ENCODE measurements at regions of chr21 and their contacts with region 1.

Region 1: GRCh38 chr21:24514081-24514733 is 1093.1 kb downstream of the MRPL39 start:
- DNase-seq: peak in 3 of 9 donors; percentile 4 to 7 (median 4)
- ATAC-seq: no peak
- H3K4me3 ChIP-seq: no peak overlapping the region
- H3K4me3 Mint-ChIP-seq: no peak overlapping the region
- H3K27ac ChIP-seq: no peak overlapping the region
- H3K27ac Mint-ChIP-seq: no peak overlapping the region
- H3K4me1 ChIP-seq: no peaks in the 10 kb centered on the region
- H3K4me1 Mint-ChIP-seq: no peaks in the 10 kb centered on the region
- H3K27me3 ChIP-seq: no peaks in the 10 kb centered on the region
- H3K27me3 Mint-ChIP-seq: no peaks in the 10 kb centered on the region

Region 2: DNA sequence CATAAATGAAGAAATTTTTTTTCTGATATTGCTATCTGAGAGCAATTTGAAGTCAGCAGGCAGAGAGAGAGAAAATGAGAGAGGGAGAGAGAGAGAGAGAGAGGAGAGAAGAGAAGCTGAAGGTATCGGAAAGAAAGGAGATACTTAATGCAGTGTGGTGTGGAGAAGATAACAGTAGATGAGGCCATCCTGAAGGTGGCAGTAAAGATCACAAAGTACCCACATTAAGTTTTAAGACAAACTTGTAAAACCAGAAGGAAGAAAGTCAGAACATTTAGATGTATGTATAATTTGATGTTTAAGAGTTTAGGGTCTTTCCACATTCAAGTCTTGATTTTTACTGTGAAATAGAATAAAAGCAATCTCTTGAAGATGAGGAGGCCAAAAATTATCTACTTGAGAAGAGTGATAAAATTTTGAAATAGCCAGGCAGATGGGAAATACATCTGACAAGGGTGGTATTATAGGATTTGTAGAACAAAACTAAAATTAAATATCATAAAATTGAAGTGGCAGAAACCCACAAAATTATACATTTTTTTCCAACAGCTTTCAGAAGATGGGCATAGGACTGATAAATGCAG is 660.3 kb before region 1 on chr21:
- CTCF ChIA-PET with region 1: interaction called, 3 read pairs
- POLR2A ChIA-PET with region 1: no interaction called
- intact Hi-C with region 1: loop called in 1 of 2 experiments (anchors 1 kb)
- DNase-seq: peak in 6 of 9 donors; percentile 18 to 56 (median 34)
- ATAC-seq: peak; percentile 75
- H3K4me3 ChIP-seq: no peak overlapping the region
- H3K4me3 Mint-ChIP-seq: no peak overlapping the region
- H3K27ac ChIP-seq: no peak overlapping the region
- H3K27ac Mint-ChIP-seq: peak overlapping the region in 1 of 9 donors; percentile 6
- H3K4me1 ChIP-seq: no peaks in the 10 kb centered on the region
- H3K4me1 Mint-ChIP-seq: peaks cover 4 to 11% (median 6%) of the 10 kb centered on the region in 7 donors
- H3K27me3 ChIP-seq: no peaks in the 10 kb centered on the region
- H3K27me3 Mint-ChIP-seq: peaks cover 0 to 8% (median 0%) of the 10 kb centered on the region in 5 donors

Region 3: GRCh38 chr21:23968722-23969647 is 545.2 kb before region 1 on chr21:
- CTCF ChIA-PET with region 1: no interaction called
- POLR2A ChIA-PET with region 1: no interaction called
- intact Hi-C with region 1: loop called in 1 of 2 experiments (anchors 1 kb)
- DNase-seq: peak; percentile 26 to 84 (median 80)
- ATAC-seq: peak; percentile 92
- H3K4me3 ChIP-seq: peak overlapping the region; percentile 13
- H3K4me3 Mint-ChIP-seq: peak overlapping the region; percentile 57 to 82 (median 76)
- H3K27ac ChIP-seq: peak overlapping the region; percentile 49
- H3K27ac Mint-ChIP-seq: peak overlapping the region; percentile 69 to 94 (median 88)
- H3K4me1 ChIP-seq: peaks cover 10 to 17% of the 10 kb centered on the region in 2 donors
- H3K4me1 Mint-ChIP-seq: peaks cover 0 to 41% (median 24%) of the 10 kb centered on the region in 7 donors
- H3K27me3 ChIP-seq: no peaks in the 10 kb centered on the region
- H3K27me3 Mint-ChIP-seq: peaks cover 0 to 23% (median 0%) of the 10 kb centered on the region in 5 donors

Region 4: GRCh38 chr21:24110846-24111245 is 403.4 kb before region 1 on chr21:
- CTCF ChIA-PET with region 1: no interaction called
- POLR2A ChIA-PET with region 1: no interaction called
- intact Hi-C with region 1: loop called in 1 of 2 experiments (anchors 5 kb)
- DNase-seq: no peak
- ATAC-seq: no peak
- H3K4me3 ChIP-seq: no peak overlapping the region
- H3K4me3 Mint-ChIP-seq: no peak overlapping the region
- H3K27ac ChIP-seq: no peak overlapping the region
- H3K27ac Mint-ChIP-seq: no peak overlapping the region
- H3K4me1 ChIP-seq: no peaks in the 10 kb centered on the region
- H3K4me1 Mint-ChIP-seq: no peaks in the 10 kb centered on the region
- H3K27me3 ChIP-seq: no peaks in the 10 kb centered on the region
- H3K27me3 Mint-ChIP-seq: no peaks in the 10 kb centered on the region

Region 5: GRCh38 chr21:25385911-25386474 is 871.8 kb after region 1 on chr21:
- CTCF ChIA-PET with region 1: no interaction called
- POLR2A ChIA-PET with region 1: no interaction called
- intact Hi-C with region 1: loop called (anchors 5 to 10 kb)
- DNase-seq: peak in 5 of 9 donors; percentile 14 to 35 (median 25)
- ATAC-seq: peak; percentile 57
- H3K4me3 ChIP-seq: no peak overlapping the region
- H3K4me3 Mint-ChIP-seq: no peak overlapping the region
- H3K27ac ChIP-seq: no peak overlapping the region
- H3K27ac Mint-ChIP-seq: peak overlapping the region in 1 of 9 donors; percentile 53
- H3K4me1 ChIP-seq: no peaks in the 10 kb centered on the region
- H3K4me1 Mint-ChIP-seq: peaks cover 0 to 9% (median 6%) of the 10 kb centered on the region in 7 donors
- H3K27me3 ChIP-seq: no peaks in the 10 kb centered on the region
- H3K27me3 Mint-ChIP-seq: peaks cover 0 to 13% (median 11%) of the 10 kb centered on the region in 5 donors